SK-N-SH (cell line): ENCODE measurements at regions of chr2 and their contacts with region 1.

Region 1: GRCh38 chr2:7044261-7045250 is 127.3 kb downstream of the RNF144A start:
- DNase-seq: peak; percentile 81
- H3K4me3 ChIP-seq: no peak overlapping the region
- H3K27ac ChIP-seq: no peak overlapping the region; a peak in 1 of 4 replicates
- H3K4me1 ChIP-seq: peaks cover 0 to 3% of the 10 kb centered on the region in 2 experiments; a peak in 1 of 4 replicates
- H3K27me3 ChIP-seq: no peaks in the 10 kb centered on the region
- CTCF ChIP-seq: peak; percentile 98
- EP300 ChIP-seq: no peak
- RAD21 ChIP-seq: peak; percentile 75

Region 2: GRCh38 chr2:6896930-6897759 is 147.4 kb before region 1 on chr2:
- CTCF ChIA-PET with region 1: interaction called, 44 read pairs
- POLR2A ChIA-PET with region 1: no interaction called
- DNase-seq: peak; percentile 52
- H3K4me3 ChIP-seq: no peak overlapping the region; a peak in 1 of 4 replicates
- H3K27ac ChIP-seq: no peak overlapping the region
- H3K4me1 ChIP-seq: no peaks in the 10 kb centered on the region; a peak in 1 of 4 replicates
- H3K27me3 ChIP-seq: no peaks in the 10 kb centered on the region
- CTCF ChIP-seq: peak; percentile 90
- EP300 ChIP-seq: no peak
- RAD21 ChIP-seq: peak; percentile 97

Region 3: DNA sequence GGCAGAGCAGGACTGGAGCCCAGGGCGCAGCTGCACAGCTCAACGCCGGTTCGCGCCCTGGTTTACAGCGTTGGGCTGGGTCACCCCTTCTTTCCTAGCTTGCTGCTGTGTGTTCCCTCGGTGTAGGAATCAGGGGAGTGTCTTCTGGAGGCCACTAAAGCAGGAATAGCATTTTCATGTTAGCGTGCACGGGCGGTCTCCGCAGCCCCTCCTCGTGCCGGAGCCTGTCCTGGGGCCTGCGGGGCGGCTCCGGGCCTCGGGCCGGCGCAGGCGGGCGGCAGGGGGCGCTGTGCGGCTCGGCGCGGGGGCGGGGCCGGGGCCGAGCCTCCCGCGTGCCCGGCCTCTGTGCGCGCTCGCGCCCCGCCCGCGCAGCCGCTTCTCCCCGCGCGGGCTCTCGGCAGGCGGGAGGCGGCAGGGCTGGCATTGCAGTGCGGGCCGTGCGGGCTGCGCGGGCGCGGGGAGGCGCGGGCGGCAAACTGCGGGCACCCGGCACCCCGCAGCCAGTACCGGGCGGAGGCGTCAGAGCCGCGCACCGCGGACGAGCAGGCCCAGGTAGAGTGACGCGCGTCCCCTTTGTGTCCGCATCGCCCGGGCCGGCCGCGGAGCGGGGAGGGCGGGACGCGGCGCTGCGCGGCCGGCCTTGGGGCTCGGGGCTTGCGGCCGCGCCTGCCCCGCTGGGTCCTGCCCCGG is 127.3 kb before region 1 on chr2 and contains the start of gene RNF144A:
- CTCF ChIA-PET with region 1: interaction called, 37 read pairs
- POLR2A ChIA-PET with region 1: no interaction called
- DNase-seq: peak; percentile 99
- H3K4me3 ChIP-seq: peak within 1 kb of the TSS; percentile 79 to 90
- H3K27ac ChIP-seq: peak within 1 kb of the TSS; percentile 57 to 89; a peak in 3 of 4 replicates
- H3K4me1 ChIP-seq: peaks cover 6 to 39% of the 10 kb centered on the region in 2 experiments; a peak in 2 of 4 replicates
- H3K27me3 ChIP-seq: no peaks in the 10 kb centered on the region
- CTCF ChIP-seq: peak; percentile 57
- EP300 ChIP-seq: no peak
- RAD21 ChIP-seq: no peak; the same call in 1 of the 2 replicates
- polyA plus RNA-seq, gene RNF144A: 15.6 and 17.3 TPM in 2 replicates

Region 4: GRCh38 chr2:7023542-7023941 is 21.0 kb before region 1 on chr2:
- CTCF ChIA-PET with region 1: interaction called, 26 read pairs
- POLR2A ChIA-PET with region 1: no interaction called
- DNase-seq: no peak
- H3K4me3 ChIP-seq: no peak overlapping the region
- H3K27ac ChIP-seq: peak overlapping the region; percentile 35 to 39; a peak in 3 of 4 replicates
- H3K4me1 ChIP-seq: peaks cover 5 to 43% of the 10 kb centered on the region in 2 experiments; a peak in 3 of 4 replicates
- H3K27me3 ChIP-seq: no peaks in the 10 kb centered on the region
- CTCF ChIP-seq: no peak
- EP300 ChIP-seq: no peak
- RAD21 ChIP-seq: no peak

Region 5: GRCh38 chr2:7057865-7058400 is 13.4 kb after region 1 on chr2:
- CTCF ChIA-PET with region 1: interaction called, 47 read pairs
- POLR2A ChIA-PET with region 1: interaction called, 4 read pairs
- DNase-seq: no peak
- H3K4me3 ChIP-seq: no peak overlapping the region
- H3K27ac ChIP-seq: peak overlapping the region in 1 of 2 experiments; percentile 45; a peak in 2 of 4 replicates
- H3K4me1 ChIP-seq: peaks cover 0 to 50% of the 10 kb centered on the region in 2 experiments; a peak in 2 of 4 replicates
- H3K27me3 ChIP-seq: no peaks in the 10 kb centered on the region
- CTCF ChIP-seq: no peak
- EP300 ChIP-seq: peak in 1 of 2 experiments; percentile 85; a peak in 2 of 4 replicates
- RAD21 ChIP-seq: no peak

Region 6: GRCh38 chr2:7071916-7072556 is 27.5 kb after region 1 on chr2:
- CTCF ChIA-PET with region 1: interaction called, 37 read pairs
- POLR2A ChIA-PET with region 1: no interaction called
- DNase-seq: no peak
- H3K4me3 ChIP-seq: no peak overlapping the region
- H3K27ac ChIP-seq: no peak overlapping the region
- H3K4me1 ChIP-seq: peaks cover 0 to 47% of the 10 kb centered on the region in 2 experiments; a peak in 2 of 4 replicates
- H3K27me3 ChIP-seq: no peaks in the 10 kb centered on the region
- CTCF ChIP-seq: no peak
- EP300 ChIP-seq: no peak
- RAD21 ChIP-seq: no peak

Region 7: GRCh38 chr2:7111626-7112025 is 67.1 kb after region 1 on chr2:
- CTCF ChIA-PET with region 1: interaction called, 22 read pairs
- POLR2A ChIA-PET with region 1: no interaction called
- DNase-seq: no peak
- H3K4me3 ChIP-seq: no peak overlapping the region
- H3K27ac ChIP-seq: no peak overlapping the region
- H3K4me1 ChIP-seq: no peaks in the 10 kb centered on the region
- H3K27me3 ChIP-seq: no peaks in the 10 kb centered on the region
- CTCF ChIP-seq: peak; percentile 26; the same call in 1 of the 2 replicates
- EP300 ChIP-seq: no peak
- RAD21 ChIP-seq: peak; percentile 53

Region 8: GRCh38 chr2:7281231-7282201 is 237.0 kb after region 1 on chr2:
- CTCF ChIA-PET with region 1: no interaction called
- POLR2A ChIA-PET with region 1: no interaction called
- DNase-seq: no peak
- H3K4me3 ChIP-seq: no peak overlapping the region
- H3K27ac ChIP-seq: no peak overlapping the region
- H3K4me1 ChIP-seq: no peaks in the 10 kb centered on the region
- H3K27me3 ChIP-seq: no peaks in the 10 kb centered on the region
- CTCF ChIP-seq: no peak
- EP300 ChIP-seq: no peak
- RAD21 ChIP-seq: no peak